ENCODE measurements at regions of chr15 and their contacts with region 1.

Region 1: DNA sequence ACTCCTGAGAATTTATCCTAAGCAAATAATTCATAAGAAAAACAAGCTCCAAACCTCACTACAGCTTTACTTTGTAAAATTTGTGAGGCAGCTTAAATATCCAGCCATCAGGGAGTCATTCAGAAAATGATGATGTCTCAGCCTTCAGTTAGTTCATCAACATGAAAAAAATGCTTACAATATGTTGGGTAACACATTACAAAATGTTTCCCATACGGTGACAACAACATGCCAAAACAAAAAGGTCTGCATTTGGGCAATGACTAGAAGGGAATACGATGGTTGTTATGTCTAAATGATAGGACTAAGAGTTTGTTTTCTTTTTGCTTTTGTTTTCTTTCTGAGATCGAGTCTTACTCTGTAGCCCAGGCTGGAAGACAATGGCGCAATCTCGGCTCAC is 47.0 kb upstream of the CFAP161 start:
- H3K4me3 Mint-ChIP-seq: no peak overlapping the region
- H3K27ac Mint-ChIP-seq: no peak overlapping the region
- H3K4me1 Mint-ChIP-seq: peaks cover 9% of the 10 kb centered on the region
- H3K27me3 Mint-ChIP-seq: peaks cover 48% of the 10 kb centered on the region

Region 2: DNA sequence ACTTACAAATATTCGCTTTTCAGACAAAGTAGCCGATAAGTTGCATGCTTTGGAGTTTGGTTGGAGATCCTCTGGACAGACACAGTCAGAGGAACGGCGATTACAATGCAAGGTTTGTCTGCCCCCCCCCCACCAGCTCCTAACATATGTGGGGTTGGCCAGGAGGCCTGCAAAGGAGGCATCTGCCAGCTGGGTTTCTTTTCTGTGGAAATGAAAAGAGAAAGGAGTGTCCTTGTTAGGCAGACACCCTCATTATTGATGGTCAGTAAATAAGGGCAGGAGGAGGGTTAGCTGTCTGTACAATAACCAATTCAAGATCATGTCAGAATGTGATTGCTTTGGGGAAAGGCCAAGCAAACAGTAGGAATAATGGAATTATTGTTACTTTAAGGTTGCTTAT is 37.2 kb before region 1 on chr15:
- intact Hi-C with region 1: loop called (anchors 5 kb)
- H3K4me3 Mint-ChIP-seq: no peak overlapping the region
- H3K27ac Mint-ChIP-seq: no peak overlapping the region
- H3K4me1 Mint-ChIP-seq: peaks cover 35% of the 10 kb centered on the region
- H3K27me3 Mint-ChIP-seq: peaks cover 12% of the 10 kb centered on the region

Region 3: DNA sequence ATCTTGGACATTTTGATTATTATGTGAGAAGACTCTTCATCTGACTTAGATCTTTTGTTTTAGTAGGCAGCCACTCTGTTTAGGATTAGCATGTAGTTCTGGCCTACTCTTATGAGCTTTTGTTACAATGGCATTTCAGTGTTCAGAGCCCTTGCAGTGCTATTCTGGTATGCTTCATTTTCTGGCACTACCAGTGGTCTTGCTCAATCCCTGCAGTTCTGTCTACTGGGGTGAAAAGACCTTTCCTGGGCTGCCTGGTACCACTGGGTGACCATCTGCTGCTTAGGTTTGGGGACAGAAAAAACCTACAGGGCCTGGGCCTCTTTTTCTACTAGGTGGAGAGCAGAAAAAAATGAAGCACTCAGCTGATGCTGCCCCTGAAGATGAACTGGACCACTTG is 152.1 kb after region 1 on chr15:
- intact Hi-C with region 1: no loop called
- H3K4me3 Mint-ChIP-seq: no peak overlapping the region
- H3K27ac Mint-ChIP-seq: no peak overlapping the region
- H3K4me1 Mint-ChIP-seq: no peaks in the 10 kb centered on the region
- H3K27me3 Mint-ChIP-seq: no peaks in the 10 kb centered on the region